Panc1 (cell line): ENCODE measurements at regions of chrX and their contacts with region 1.

Region 1: DNA sequence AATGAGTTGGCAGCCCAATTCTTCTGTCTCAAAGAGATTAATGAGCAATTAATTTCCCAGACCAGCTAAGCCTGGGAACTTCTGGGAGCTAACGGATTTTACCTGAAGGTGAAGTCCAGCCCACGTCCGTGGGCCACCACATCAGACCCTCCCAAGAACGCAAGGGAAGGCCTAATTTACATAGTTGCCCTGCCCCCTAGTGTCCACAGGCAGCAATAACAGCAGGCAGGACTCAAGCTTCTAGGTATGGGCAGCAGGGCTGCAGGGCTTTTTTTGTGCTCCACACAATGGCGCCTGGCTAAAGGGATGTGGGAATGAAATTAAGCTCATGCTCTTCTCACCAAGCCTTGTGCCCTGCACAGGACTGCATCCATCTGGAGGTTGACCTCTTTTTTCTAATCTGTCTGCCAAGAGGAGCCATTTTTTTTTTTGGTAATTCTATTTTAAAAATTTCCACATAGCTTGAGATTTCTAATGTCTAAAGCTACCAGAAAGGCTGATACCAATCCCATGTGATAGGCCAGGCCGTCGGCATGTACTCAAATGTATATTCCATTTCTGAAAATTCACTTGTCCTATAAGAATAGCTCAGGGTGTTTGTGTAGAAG is 111.9 kb upstream of the TMEM164 start:
- DNase-seq: peak; percentile 47
- ATAC-seq: peak; percentile 86
- H3K4me3 ChIP-seq: no peak overlapping the region
- H3K27ac ChIP-seq: no peak overlapping the region
- H3K4me1 ChIP-seq: no peaks in the 10 kb centered on the region
- H3K27me3 ChIP-seq: no peaks in the 10 kb centered on the region; the same call in 1 of the 2 replicates
- CTCF ChIP-seq: peak; percentile 88

Region 2: DNA sequence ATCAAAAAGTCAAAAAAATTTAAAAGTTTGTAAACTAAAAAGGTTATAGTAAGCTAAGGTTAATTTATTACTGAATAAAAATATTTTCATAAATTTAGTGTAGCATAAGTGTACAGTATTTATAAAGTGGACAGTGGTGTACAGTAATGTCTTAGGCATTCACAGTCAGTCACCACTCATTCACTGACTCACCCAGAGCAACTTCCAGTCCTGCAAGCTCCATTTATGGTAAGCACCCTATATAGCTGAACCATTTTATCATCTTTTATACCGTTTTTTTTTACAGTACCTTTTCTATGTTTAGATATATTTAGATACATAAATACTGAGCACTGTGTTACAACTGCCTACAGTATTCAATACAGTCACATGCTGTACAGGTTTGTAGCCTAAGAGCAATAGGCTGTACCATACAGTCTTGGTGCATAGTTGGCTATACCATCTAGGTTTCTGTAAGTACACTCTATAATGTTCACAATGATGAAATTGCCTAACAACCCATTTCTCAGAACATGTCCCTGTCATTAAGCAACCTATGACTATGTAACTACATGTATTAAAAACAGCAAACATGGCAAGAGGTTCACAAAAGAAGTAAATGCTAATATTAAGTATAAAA is 176.6 kb before region 1 on chrX:
- CTCF ChIA-PET with region 1: interaction called, 17 read pairs
- POLR2A ChIA-PET with region 1: no interaction called
- in situ Hi-C with region 1: no loop called
- intact Hi-C with region 1: loop called (anchors 1 kb)
- DNase-seq: no peak
- ATAC-seq: peak; percentile 93
- H3K4me3 ChIP-seq: no peak overlapping the region
- H3K27ac ChIP-seq: no peak overlapping the region
- H3K4me1 ChIP-seq: peaks cover 5% of the 10 kb centered on the region; the same call in 1 of the 2 replicates
- H3K27me3 ChIP-seq: no peaks in the 10 kb centered on the region
- CTCF ChIP-seq: no peak

Region 3: GRCh38 chrX:109760241-109760922 is 130.6 kb before region 1 on chrX:
- CTCF ChIA-PET with region 1: no interaction called
- POLR2A ChIA-PET with region 1: no interaction called
- in situ Hi-C with region 1: no loop called
- intact Hi-C with region 1: no loop called
- DNase-seq: no peak
- ATAC-seq: no peak
- H3K4me3 ChIP-seq: no peak overlapping the region
- H3K27ac ChIP-seq: no peak overlapping the region
- H3K4me1 ChIP-seq: no peaks in the 10 kb centered on the region
- H3K27me3 ChIP-seq: peaks cover 2% of the 10 kb centered on the region; the same call in 1 of the 2 replicates
- CTCF ChIP-seq: no peak